HCT116 (cell line): ENCODE measurements at regions of chr1 and their contacts with region 1.

Region 1: DNA sequence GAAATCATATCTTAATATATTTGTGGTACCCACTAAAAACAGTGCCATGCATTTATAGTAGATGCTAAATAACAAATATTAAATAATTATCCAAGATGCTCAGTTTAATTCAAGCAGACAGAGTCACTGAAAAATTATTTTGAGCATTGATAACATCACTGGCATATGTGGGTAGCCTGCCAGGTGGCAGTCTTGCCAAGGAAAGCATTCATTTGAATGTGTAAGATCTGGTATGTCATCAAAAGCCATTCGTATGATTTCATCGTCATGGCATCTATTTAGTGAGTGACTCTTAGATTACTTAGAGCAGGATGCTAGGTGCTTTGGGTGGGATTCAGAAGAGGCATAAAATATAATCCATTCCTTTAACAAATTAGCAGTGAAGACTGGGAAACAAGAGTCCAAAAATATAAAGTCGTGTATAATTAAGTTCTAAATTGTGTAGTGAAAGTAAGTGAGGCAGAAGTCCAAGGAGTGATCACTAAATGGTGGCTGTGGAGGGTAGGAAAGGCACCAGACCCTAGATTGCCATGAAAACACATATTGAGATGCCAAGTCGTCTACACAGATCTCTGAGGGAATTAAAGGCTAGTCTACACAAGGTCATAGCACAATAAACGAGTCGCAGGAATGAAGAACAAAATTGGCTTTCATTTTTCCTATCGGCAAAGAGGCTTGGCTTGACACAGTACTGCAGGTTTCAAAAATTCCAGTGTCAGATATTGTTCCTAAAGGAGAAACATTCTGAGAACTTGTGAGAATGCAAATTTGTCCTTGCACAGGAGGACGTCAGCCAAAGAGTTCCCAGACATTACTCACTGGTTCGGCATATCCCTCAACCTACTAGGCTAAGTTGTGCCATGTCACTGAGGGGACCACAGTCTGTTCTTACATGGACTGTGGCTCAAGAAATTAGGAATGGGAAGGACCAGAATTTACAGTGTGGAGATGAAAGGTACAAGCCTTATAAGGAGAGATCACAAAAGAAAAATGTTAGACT is 130.8 kb downstream of the LYPLAL1 start:
- DNase-seq: no peak
- ATAC-seq: no peak
- H3K4me3 ChIP-seq: no peak overlapping the region
- H3K27ac ChIP-seq: no peak overlapping the region
- H3K4me1 ChIP-seq: peaks cover 0 to 6% of the 10 kb centered on the region in 2 experiments; a peak in 2 of 4 replicates
- H3K27me3 ChIP-seq: no peaks in the 10 kb centered on the region
- CTCF ChIP-seq: peak in 2 of 3 experiments; percentile 25 to 31; a peak in 3 of 6 replicates
- POLR2A ChIP-seq: no peak
- RAD21 ChIP-seq: peak; percentile 49; the same call in 1 of the 2 replicates

Region 2: DNA sequence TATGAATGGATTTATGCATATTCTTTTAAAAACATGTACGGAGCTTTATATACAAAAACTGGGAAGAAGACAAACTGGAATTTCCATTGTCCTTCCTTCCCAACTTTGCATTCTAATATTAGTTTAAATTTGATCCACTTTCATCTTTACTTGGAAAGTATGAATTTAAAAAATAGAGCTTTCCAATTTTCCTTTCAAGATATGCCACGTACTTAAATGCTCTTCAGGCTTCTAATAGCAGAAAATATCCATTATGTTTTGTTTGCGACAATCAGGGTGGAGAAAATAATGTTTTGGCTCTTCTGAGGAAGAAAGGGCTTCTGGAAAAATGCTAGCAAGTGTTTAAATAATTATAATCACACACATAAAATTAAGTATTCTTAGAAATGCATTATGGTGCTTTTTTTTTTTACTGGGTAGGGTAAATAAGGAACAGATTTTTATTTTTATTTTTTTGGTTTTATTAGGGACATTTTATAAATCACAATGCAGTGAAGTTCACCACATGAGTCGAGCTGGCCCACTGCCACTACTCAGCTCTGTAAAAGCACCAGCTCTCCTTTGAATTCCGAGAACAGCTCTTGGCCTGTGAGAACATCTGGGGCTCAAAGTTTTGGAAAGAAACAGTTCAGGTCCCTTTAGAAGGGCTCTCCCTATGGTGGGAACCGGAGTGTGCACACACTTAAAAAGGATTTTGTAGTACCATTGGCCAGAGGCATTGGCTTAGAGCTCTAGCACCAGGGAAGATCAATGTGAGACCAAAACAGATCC is 418.2 kb before region 1 on chr1:
- CTCF ChIA-PET with region 1: no interaction called
- POLR2A ChIA-PET with region 1: no interaction called
- RAD21 ChIA-PET with region 1: no interaction called
- intact Hi-C with region 1: no loop called
- DNase-seq: no peak
- ATAC-seq: no peak
- H3K4me3 ChIP-seq: no peak overlapping the region
- H3K27ac ChIP-seq: no peak overlapping the region
- H3K4me1 ChIP-seq: peaks cover 6 to 16% of the 10 kb centered on the region in 2 experiments; a peak in 3 of 4 replicates
- H3K27me3 ChIP-seq: no peaks in the 10 kb centered on the region
- CTCF ChIP-seq: no peak
- POLR2A ChIP-seq: no peak
- RAD21 ChIP-seq: no peak

Region 3: DNA sequence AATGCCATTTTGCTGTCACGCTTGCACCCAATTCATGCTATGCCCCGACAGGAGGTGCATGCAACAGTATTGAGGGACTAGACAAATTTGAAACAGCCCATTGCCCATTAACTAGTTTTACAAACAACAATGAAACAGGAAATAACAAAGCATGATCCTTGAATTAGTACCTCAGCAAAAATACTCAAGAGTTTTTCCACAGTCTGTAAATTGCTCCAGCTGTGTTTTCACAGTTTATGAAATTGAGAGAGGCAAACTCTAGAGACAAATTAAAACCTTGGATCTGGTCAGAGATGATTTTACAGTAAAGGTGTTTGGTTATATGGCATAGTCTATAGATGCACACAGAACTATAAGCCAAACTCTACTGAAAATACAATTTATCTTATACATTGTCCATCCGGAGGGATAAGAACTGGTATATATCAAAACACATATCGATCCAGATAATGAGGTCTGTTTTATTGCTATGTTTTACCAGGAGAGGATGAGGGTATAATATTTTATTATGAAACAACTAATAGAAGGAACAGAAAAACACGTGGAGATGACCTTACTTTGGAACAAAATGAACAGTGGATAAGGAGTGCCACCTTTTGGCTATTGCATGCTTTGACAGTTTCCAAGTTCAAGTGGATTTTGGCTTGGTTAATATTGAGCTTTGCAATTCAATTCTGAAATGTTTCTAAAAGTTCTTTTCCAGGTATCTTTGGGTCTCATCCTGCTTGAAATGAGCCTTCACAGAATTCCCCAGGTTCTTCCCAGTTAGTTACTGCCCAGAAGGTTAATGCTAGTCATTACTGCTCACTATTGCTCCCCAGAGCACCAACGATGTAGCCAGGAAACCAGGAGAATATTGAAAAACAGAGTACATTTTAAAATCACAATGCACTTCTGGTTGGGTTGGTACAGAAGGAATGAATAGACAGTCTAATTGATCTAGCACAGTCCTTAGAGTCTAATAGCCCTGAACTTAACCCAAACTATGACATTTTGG is 262.7 kb after region 1 on chr1:
- CTCF ChIA-PET with region 1: no interaction called
- POLR2A ChIA-PET with region 1: no interaction called
- RAD21 ChIA-PET with region 1: no interaction called
- intact Hi-C with region 1: loop called (anchors 5 kb)
- DNase-seq: peak; percentile 21
- ATAC-seq: peak; percentile 68
- H3K4me3 ChIP-seq: no peak overlapping the region
- H3K27ac ChIP-seq: no peak overlapping the region
- H3K4me1 ChIP-seq: no peaks in the 10 kb centered on the region
- H3K27me3 ChIP-seq: no peaks in the 10 kb centered on the region
- CTCF ChIP-seq: peak; percentile 41 to 64 (median 49); a peak in 4 of 6 replicates
- POLR2A ChIP-seq: no peak
- RAD21 ChIP-seq: peak; percentile 74